ENCODE measurements at regions of chr1 and their contacts with region 1.

Region 1: DNA sequence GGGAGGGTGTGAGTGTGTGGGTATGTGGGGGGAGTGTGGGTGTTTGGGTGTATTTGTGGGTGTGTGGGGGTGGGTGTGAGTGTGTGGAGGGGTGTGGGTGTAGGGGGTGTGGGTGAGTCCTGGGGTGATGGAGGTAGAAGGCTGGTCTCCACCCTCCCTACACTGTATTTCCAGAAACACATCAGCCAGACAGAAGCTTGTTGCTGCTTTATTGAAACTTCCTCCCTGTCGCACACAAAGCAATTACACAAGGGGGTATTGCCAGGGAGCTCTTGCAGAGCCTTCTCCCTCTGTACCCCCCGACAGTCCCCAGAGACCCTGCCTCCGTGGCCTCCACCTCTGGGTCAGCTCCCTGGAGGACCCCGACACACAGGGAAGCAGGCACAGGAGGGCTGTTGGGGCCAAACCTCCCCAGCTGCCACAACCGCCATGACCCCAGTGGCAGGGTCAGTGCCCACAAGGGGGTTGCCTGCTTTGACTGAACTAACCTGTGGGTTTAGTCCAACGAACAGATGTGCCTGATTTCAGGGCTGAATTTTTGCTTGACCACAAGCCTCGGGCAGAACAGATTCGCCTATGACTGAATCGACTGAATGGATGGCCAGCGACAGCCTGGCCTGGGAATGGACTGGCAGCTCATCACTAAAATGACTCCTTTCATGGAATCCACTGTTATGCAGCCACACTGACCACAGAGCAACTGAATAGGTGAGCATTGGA is 9.1 kb upstream of the MATN1 start:
- DNase-seq: no peak
- H3K4me3 Mint-ChIP-seq: no peak overlapping the region
- H3K27ac Mint-ChIP-seq: peak overlapping the region; percentile 50
- H3K4me1 Mint-ChIP-seq: peaks cover 3% of the 10 kb centered on the region
- H3K27me3 Mint-ChIP-seq: no peaks in the 10 kb centered on the region

Region 2: DNA sequence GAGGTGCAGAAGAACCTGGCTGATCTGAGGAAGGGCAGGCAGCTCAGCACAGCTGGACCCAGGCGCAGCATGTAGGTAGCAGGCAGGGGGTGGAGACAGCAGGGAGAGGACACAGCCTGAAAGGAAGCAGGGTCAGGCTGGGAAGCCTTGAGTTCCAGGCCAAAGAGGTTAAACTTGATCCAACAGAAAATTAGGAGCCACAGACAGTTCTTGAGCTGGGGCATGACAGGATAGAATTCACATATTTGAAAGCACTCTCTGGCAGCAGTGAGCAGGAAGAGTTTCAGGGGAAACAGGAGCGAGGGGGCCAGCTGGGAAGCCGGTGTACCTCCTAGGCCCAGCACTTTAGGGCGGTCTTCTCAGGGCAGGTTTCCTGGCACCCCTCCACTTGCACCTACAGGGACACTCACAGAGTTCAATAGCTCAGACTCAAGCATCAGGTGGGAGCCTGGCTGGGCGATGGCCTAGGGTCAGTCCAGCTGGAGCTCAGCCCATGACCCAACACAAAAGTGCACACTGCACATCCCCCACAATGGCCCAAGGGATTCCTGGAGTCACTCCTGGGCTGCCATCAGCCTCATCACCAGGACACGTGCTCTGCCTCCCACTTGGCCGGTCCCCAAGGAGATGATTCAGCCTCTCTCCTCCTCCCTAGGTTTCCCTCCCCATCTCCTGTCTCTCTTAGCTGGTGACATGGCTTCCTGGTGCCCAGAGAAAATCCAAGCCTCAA is 31.7 kb before region 1 on chr1:
- intact Hi-C with region 1: no loop called
- DNase-seq: no peak
- H3K4me3 Mint-ChIP-seq: no peak overlapping the region
- H3K27ac Mint-ChIP-seq: no peak overlapping the region
- H3K4me1 Mint-ChIP-seq: no peaks in the 10 kb centered on the region
- H3K27me3 Mint-ChIP-seq: no peaks in the 10 kb centered on the region

Region 3: DNA sequence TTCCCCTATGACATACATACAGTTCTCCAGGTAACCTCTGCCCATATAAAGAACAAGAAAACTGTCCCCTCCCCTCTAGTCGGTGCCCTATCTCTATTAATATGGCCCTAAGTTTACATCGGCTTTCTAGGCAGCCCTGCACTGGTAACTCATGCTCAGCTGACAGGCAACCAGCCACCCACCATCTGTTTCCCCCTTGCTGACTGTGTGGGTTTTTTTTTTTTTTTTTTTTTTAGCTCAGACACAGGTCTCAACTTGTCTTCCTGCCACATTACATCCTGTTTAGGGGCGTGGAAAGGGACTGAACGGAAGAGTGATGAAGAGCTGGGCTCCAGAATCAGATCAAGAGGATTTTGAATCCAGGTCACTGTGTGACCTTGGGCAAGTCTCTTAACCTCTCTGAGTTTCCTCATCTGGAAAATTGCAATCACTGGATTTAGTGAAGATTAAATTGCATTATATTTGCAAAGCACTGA is 11.2 kb after region 1 on chr1:
- intact Hi-C with region 1: loop called (anchors 2 kb)
- DNase-seq: peak; percentile 70
- H3K4me3 Mint-ChIP-seq: peak overlapping the region; percentile 49
- H3K27ac Mint-ChIP-seq: peak overlapping the region; percentile 84
- H3K4me1 Mint-ChIP-seq: peaks cover 89% of the 10 kb centered on the region
- H3K27me3 Mint-ChIP-seq: no peaks in the 10 kb centered on the region

Region 4: DNA sequence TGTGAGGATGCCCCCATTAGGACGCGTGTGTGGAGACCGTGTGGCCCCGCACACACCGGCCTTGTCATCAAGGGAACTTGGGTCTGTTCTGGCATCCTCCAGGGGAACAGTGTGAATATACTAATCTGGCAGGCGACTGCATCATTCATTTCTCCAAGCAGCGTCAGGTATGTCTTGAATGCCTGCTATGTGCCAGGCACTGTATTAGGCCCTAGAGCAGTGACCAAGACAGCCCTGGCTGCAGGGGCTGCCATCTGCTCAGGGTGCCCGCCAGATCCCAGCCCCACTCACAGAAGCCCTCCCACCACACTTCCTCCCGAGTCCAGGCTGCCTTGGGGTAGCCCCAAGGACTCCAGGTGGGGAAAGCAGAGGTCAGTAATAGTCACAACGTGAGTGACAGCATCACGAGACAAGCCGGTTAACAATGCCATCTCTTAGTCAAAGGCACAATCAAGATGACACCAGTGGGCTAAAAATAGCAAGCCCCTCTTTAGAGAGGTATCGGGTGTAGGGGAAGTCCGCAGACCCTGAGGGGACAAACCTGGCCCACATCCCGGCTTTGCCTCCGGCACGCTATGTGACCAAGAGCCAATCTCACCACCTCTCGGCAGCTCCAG is 32.6 kb after region 1 on chr1:
- intact Hi-C with region 1: loop called (anchors 5 kb)
- DNase-seq: no peak
- H3K4me3 Mint-ChIP-seq: no peak overlapping the region
- H3K27ac Mint-ChIP-seq: peak overlapping the region; percentile 88
- H3K4me1 Mint-ChIP-seq: peaks cover 57% of the 10 kb centered on the region
- H3K27me3 Mint-ChIP-seq: no peaks in the 10 kb centered on the region